OCI-LY7 (cell line): ENCODE measurements at regions of chr1 and their contacts with region 1.

Region 1: DNA sequence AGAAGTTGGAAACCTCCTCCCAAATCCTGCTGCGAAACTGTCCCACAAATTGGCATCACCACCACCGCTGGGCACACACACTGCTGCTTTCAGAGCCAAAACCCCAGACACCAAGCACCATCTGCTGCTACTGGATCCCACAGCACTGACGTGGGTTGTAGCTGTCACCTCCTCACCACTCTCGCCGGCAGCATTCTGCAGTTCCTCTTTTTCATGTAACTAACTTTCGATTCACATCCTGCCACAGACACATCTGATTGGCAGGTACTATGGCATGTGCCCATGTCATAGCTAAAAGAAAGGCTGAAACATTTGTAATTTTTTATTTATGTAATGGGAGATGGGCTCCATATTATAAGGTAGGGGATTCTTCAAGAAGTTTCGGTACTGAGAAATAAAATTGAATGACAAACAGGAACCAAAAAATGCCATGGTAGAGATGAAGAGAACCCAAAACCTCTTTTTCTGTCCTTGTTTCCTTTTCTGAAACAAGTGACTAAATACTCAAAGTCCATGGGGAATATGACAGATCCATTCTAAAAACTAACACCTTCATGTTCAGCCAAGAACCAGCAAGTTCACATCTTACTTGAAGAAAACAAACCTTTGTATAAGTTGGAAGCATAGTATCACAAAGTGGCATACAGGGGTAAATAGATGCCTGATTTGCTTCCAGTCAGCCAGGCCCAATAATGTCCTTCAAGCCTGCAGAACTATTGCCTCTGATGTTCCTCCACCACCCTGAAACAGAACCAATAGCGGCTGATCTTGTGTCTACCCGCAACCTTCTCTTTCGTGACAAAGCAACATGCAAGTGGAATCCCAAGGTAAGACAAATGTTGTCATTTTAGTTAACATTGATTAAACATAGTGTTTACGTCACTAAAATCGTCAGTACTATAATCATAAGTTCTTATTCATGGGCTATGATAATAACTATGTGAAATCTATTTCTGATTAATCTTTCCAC is 26.6 kb upstream of the RGS13 start:
- DNase-seq: peak; percentile 93
- H3K4me3 ChIP-seq: peak overlapping the region; percentile 35
- H3K27ac ChIP-seq: peak overlapping the region; percentile 76
- H3K4me1 ChIP-seq: peaks cover 70% of the 10 kb centered on the region
- CTCF ChIP-seq: peak; percentile 37; the same call in 1 of the 2 replicates

Region 2: DNA sequence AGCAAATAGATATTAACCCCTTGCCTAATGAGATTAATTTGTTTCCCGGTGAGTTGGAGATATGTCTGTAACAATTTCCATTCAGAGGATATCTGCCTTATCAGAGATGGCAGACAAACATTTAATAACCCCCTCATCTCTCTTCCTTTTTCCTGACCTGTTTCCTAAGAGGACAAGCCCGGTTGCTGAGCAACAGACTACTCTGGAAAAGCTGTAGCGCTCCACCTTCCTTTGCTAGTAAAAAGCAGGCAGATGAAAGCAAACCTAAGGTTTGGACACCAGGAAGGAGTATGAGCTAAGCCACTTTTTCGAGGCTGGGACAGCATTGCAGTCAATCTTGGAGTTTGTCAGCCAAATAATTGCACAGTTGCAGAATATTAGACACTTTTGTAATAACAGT is 210.2 kb before region 1 on chr1:
- CTCF ChIA-PET with region 1: no interaction called
- POLR2A ChIA-PET with region 1: no interaction called
- intact Hi-C with region 1: no loop called
- DNase-seq: no peak
- H3K4me3 ChIP-seq: no peak overlapping the region
- H3K27ac ChIP-seq: no peak overlapping the region
- H3K4me1 ChIP-seq: no peaks in the 10 kb centered on the region
- CTCF ChIP-seq: no peak

Region 3: DNA sequence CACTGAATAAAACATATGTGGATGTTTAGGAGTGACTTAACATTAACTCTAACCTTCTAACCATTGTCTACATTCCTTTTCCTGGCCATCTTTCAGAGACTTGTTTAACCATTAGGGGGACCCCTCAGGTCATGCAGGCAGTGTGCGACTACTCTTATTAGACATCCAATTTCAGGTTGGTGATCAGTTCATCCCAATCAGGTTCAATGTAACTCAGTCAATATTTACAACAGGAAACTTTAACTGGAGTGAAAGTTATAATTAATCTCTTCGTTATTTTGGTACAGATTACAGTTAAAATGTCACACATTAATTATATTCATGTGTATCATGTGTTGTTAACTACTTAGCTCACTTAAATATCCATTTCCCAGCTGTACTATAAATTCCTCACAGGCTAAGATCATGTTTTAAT is 102.6 kb before region 1 on chr1:
- CTCF ChIA-PET with region 1: interaction called, 3 read pairs
- POLR2A ChIA-PET with region 1: interaction called, 3 read pairs
- intact Hi-C with region 1: loop called (anchors 1 kb)
- DNase-seq: peak; percentile 60
- H3K4me3 ChIP-seq: no peak overlapping the region
- H3K27ac ChIP-seq: no peak overlapping the region
- H3K4me1 ChIP-seq: no peaks in the 10 kb centered on the region
- CTCF ChIP-seq: peak; percentile 80

Region 4: DNA sequence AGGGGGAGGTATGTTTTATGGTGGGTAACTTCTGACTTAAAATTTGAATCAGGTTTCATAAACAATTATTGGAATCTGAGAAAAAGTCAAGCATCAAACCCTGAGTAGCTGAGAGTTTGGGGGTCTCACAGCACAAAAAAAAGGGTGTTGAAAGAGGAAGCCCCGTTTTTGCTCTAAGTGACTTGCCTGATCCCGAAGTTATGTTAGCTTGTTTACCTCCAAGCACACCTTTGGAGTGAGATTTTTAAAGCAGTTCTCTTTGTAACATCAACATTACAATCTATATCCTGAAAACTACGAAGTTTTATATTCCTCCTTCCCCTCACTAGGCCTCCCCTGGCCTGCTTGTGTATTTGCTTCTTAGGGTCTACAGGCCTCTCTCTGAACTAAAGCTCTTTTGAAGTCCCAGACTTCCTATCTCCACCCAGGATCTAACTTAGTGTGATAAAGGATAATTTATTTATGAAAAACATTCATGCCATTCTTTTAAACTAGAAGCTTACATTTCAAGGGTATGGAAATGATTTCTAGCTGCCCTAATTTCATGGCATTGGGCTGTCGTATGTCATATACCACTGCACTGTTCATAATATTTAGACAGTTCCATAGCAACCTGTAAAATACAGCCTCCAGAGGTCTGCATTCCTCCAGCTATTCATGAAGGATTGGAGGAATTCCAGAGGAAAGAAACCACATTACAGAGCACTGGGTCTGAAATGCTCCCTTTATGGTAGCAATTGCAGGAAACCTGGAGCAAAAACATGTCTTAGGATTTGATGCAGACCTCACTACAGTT is 69.9 kb before region 1 on chr1:
- CTCF ChIA-PET with region 1: interaction called, 3 read pairs
- POLR2A ChIA-PET with region 1: interaction called, 15 read pairs
- intact Hi-C with region 1: loop called (anchors 2 kb)
- DNase-seq: no peak
- H3K4me3 ChIP-seq: peak overlapping the region; percentile 51
- H3K27ac ChIP-seq: peak overlapping the region; percentile 86
- H3K4me1 ChIP-seq: peaks cover 36% of the 10 kb centered on the region
- CTCF ChIP-seq: no peak

Region 5: DNA sequence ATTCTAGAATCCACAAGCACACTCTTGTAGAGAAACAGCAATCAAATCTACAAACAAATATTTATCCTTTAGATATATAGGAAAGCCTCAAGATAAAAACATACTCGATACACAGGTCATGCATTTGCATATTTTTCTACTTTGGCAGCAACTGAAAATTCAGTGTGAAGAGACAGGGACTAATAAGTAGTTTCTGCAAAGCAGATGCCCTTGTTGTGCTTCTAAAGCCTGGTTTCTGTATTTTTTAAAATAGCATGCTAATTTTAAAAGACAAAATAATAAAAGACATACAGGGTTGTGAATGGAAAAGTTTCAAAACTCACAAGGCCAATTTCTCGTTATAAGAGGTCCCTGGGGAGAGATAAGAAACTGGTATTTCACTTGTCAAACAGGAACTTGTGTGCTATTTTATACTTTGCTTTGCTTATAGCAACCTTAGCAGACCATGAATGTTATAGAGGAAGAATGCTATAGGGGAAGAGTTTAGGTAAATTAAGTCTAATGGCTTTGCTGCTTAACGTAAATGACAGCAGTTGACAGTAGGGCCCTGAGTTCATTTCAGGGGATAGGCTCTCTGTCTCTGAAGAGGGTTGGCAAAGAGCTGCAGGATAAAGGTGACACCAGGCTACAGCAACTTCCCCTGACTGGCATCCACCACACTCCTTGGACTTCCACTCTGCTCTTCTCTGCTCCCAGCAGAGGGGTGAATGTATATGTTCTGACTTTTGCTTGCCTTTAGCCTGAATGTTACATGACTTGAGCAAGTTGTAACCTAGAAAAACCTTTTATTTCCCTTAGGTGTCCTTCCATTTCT is 17.2 kb after region 1 on chr1:
- CTCF ChIA-PET with region 1: no interaction called
- POLR2A ChIA-PET with region 1: interaction called, 90 read pairs
- intact Hi-C with region 1: no loop called
- DNase-seq: peak; percentile 94
- H3K4me3 ChIP-seq: peak overlapping the region; percentile 66
- H3K27ac ChIP-seq: peak overlapping the region; percentile 100
- H3K4me1 ChIP-seq: peaks cover 67% of the 10 kb centered on the region
- CTCF ChIP-seq: no peak

Region 6: DNA sequence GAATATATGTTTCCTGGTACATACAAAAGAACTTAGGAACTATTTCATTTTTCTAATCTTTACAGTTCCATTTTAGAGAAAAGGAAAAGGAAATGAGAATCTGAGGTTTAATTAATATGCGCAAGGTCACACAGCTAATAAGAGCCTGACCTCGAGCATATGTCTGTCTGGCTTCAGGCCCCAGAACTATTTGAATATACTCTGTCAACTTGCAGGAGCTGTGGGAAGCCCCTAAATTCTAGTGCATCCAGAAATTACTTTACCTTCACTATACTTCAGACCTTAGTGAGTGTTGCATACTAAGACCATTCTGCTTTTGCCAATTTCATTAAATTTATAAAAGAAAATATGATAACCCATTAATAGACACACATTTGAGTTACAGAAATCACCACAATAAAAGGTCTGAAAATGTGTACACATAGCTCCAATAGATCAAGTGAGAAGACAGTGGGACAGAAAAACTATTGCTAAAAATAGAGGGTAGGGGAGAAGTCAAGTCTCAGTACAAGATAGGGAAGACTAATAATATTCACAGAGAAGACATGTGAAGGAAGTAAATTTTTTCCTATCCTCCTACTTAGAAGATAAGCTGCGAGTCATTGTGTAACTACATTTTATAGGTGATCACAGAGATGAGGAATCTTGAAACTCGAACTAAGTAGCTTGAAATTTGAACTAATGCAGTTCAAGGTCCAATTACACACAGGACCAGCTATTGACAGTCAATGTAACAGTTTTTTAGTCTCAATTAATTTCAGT is 30.4 kb after region 1 on chr1:
- CTCF ChIA-PET with region 1: no interaction called
- POLR2A ChIA-PET with region 1: interaction called, 90 read pairs
- intact Hi-C with region 1: loop called (anchors 2 kb)
- DNase-seq: peak; percentile 42
- H3K4me3 ChIP-seq: peak overlapping the region; percentile 80
- H3K27ac ChIP-seq: peak overlapping the region; percentile 100
- H3K4me1 ChIP-seq: peaks cover 42% of the 10 kb centered on the region
- CTCF ChIP-seq: no peak